ENCODE measurements at regions of chr9 and their contacts with region 1.

Region 1: GRCh38 chr9:117343427-117343826 is 71.4 kb downstream of the ASTN2 start:
- DNase-seq: no peak
- H3K4me3 ChIP-seq: no peak overlapping the region
- H3K27ac ChIP-seq: no peak overlapping the region
- H3K4me1 ChIP-seq: no peaks in the 10 kb centered on the region
- H3K27me3 ChIP-seq: no peaks in the 10 kb centered on the region
- CTCF ChIP-seq: no peak
- EP300 ChIP-seq: no peak
- POLR2A ChIP-seq: no peak

Region 2: DNA sequence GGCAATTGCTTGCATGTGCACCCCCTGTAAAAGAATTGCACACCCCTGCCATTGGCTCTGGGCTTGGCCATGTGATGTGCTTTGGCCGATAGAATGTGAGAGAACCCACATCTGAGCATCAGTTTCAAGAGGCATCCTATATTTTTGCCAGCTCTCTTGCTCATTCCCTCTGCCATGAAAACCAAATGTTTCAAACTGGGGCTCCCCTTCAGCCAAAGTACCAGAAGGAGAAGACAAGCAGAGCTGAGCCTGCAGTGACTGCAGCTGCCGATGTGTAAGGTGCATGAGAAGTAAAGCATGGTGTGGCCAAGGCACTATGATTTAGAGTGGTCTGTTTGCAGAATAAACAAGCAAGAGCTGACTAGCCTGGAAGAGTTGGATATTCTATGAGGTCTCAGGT is 60.9 kb before region 1 on chr9:
- intact Hi-C with region 1: loop called in 1 of 4 experiments (anchors 2 kb)
- DNase-seq: no peak
- H3K4me3 ChIP-seq: no peak overlapping the region
- H3K27ac ChIP-seq: no peak overlapping the region
- H3K4me1 ChIP-seq: no peaks in the 10 kb centered on the region
- H3K27me3 ChIP-seq: no peaks in the 10 kb centered on the region
- CTCF ChIP-seq: no peak
- EP300 ChIP-seq: no peak
- POLR2A ChIP-seq: no peak

Region 3: DNA sequence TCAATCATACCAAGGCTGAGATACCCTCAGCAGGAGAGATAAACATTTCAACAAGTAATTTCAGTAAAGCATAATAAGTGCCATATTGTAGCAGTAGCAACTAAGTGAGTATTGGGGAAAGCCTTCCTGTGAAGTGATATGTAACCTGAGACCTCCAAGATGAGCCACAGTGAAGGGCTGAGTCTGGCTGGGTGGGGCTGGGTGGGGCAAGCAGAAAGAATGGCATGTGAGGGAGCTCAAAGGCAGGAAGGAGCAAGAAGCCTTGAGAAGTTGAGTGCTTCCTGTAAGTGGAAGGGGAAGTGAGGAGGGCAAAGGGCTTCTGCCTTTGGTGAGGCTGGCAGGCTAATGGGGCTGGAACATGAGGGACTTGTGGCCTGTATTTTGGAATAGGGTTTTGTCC is 91.1 kb after region 1 on chr9:
- intact Hi-C with region 1: no loop called
- DNase-seq: no peak
- H3K4me3 ChIP-seq: no peak overlapping the region
- H3K27ac ChIP-seq: no peak overlapping the region
- H3K4me1 ChIP-seq: no peaks in the 10 kb centered on the region
- H3K27me3 ChIP-seq: no peaks in the 10 kb centered on the region
- CTCF ChIP-seq: no peak
- EP300 ChIP-seq: no peak
- POLR2A ChIP-seq: no peak

Measured in ovary (tissue), 10 donors.